BJ (cell line): ENCODE measurements at regions of chr2 and their contacts with region 1.

Region 1: DNA sequence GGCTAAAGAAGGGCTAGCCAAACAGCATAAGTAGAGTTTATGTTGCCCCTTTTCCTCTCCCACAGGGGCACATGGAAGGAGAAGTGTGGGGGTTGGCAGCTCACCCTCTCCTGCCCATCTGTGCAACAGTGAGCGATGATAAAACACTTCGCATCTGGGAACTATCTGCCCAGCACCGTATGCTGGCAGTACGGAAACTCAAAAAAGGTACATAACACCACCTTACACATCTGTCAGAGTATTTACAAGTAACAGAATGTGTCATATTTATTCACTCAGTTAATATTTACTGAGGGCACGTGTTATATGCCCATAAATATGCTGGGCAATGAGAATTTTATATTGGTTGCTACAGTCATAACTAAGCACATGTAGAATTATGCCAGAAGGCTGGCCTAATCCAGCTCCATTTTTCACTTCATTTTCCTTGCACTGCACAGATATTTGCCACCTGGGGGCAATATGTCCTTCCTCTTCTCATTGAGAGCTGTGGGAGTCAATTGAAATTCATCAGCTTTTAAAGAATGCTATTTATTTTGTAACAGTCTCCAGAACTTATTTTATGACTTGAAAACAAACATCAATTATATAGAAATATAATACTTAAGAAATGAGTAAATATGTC is 150.6 kb downstream of the RTN4 start:
- DNase-seq: no peak
- H3K4me3 ChIP-seq: no peak overlapping the region
- H3K27me3 ChIP-seq: no peaks in the 10 kb centered on the region
- CTCF ChIP-seq: peak; percentile 70

Region 2: GRCh38 chr2:54455563-54456361 is 443.9 kb before region 1 on chr2 and contains the start of gene SPTBN1:
- CTCF ChIA-PET with region 1: no interaction called
- POLR2A ChIA-PET with region 1: no interaction called
- DNase-seq: peak; percentile 41
- H3K4me3 ChIP-seq: peak within 1 kb of the TSS; percentile 85
- H3K27me3 ChIP-seq: no peaks in the 10 kb centered on the region
- CTCF ChIP-seq: no peak
- polyA plus RNA-seq, gene SPTBN1: 33.8 and 39.1 TPM in 2 replicates

Region 3: GRCh38 chr2:54597153-54597848 is 302.4 kb before region 1 on chr2:
- CTCF ChIA-PET with region 1: no interaction called
- POLR2A ChIA-PET with region 1: no interaction called
- DNase-seq: no peak
- H3K4me3 ChIP-seq: no peak overlapping the region
- H3K27me3 ChIP-seq: no peaks in the 10 kb centered on the region
- CTCF ChIP-seq: no peak

Region 4: DNA sequence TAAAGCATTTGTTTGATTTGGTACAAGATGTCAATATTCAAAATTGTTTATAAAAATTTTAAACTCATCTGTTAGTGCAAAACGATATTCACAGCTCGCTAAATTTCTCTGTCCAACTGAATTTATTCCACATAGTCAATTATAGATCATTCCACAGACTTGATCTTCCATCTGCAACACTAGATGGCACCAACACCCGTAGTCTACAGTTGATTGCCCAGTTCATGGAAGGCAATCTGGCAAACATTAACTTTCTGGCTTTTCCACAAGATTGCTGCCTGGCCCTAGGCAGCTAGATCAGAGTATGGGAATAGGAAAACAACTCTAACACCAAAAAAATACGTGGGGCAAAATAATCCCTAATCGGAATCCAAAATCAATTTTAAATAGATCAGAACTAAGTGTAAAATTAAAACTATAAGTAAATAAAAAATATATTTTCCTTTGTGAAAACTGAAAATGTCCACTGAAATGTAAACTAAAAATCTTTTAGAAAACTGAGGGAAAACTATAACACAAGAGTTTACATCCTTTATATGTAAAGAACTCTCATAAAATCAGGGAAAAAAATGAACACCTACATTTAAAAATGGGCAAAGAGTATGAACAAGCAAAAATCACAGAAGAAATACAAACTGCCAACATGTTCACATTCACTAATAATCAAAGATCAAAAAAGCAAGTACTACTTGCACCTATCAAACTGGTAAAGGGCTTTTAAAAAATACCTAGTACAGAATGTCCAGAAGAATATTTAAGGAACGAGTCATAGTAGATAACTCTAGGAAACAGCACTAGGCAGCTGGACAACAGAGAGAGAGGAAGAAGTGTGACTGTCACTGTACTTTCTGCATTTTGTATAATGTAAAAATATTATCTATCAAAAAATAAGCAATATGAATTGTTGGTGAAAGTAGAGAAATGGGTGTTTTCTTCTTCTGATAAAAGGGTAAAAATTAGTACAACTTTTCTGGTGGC is 115.6 kb after region 1 on chr2:
- CTCF ChIA-PET with region 1: interaction called, 17 read pairs
- POLR2A ChIA-PET with region 1: no interaction called
- DNase-seq: peak; percentile 21
- H3K4me3 ChIP-seq: no peak overlapping the region
- H3K27me3 ChIP-seq: no peaks in the 10 kb centered on the region
- CTCF ChIP-seq: peak; percentile 57

Region 5: DNA sequence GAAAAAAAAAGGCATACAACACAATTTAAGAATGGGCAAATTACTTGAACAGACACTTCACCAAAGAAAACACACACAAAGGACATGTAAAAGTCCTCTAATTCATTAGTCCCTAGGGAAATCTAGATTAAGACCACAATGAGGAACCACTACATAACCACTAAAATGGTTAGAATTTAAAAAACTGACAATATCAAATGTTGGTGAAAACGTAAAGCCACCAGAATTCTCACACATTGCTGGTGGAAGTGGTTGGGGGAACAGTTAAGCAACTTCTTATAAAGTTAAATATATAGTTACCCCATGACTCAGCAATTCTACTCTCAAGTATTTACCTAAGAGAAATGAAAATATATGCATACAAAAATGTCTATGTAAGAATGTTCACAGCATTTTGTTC is 138.7 kb after region 1 on chr2:
- CTCF ChIA-PET with region 1: interaction called, 3 read pairs
- POLR2A ChIA-PET with region 1: interaction called, 10 read pairs
- DNase-seq: no peak
- H3K4me3 ChIP-seq: no peak overlapping the region
- H3K27me3 ChIP-seq: no peaks in the 10 kb centered on the region
- CTCF ChIP-seq: no peak